Caco-2 (cell line): ENCODE measurements at regions of chr5 and their contacts with region 1.

Region 1: GRCh38 chr5:157598350-157598936 is 22.9 kb upstream of the ADAM19 start:
- DNase-seq: no peak
- H3K4me3 ChIP-seq: no peak overlapping the region
- H3K4me3 Mint-ChIP-seq: no peak overlapping the region
- H3K27ac Mint-ChIP-seq: no peak overlapping the region
- H3K4me1 ChIP-seq: peaks cover 22% of the 10 kb centered on the region
- H3K4me1 Mint-ChIP-seq: peaks cover 10% of the 10 kb centered on the region
- H3K27me3 ChIP-seq: no peaks in the 10 kb centered on the region
- H3K27me3 Mint-ChIP-seq: no peaks in the 10 kb centered on the region
- CTCF ChIP-seq: no peak

Region 2: DNA sequence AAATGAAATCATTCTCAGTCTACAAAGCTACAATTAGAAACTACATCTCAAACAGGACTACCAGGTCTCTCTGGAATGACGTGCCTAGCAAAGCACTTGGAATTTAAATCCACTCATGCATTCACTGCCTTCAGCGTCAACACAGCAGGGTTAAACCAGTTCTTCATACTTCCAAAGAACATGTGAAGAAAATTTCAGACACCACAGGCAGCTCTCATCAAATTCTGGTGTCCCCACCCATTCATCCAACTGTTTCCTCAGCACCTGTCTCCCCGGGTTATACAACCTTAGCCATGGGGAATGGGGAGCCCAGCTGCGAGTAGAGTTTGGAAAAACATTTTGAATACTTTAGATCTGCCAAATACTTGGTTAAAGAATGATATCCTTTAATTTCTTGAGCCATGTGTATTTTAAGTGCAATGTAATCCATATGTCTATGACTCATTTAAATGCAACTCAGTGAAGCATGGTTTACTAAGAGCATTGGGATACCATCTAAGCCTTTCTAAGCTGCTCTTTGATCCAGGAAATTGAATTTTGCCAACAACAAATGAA is 40.3 kb before region 1 on chr5:
- CTCF ChIA-PET with region 1: interaction called, 3 read pairs
- POLR2A ChIA-PET with region 1: no interaction called
- intact Hi-C with region 1: loop called (anchors 1 kb)
- DNase-seq: peak in 1 of 2 experiments; percentile 41
- H3K4me3 ChIP-seq: no peak overlapping the region
- H3K4me3 Mint-ChIP-seq: no peak overlapping the region
- H3K27ac Mint-ChIP-seq: no peak overlapping the region
- H3K4me1 ChIP-seq: peaks cover 37% of the 10 kb centered on the region
- H3K4me1 Mint-ChIP-seq: peaks cover 36% of the 10 kb centered on the region
- H3K27me3 ChIP-seq: no peaks in the 10 kb centered on the region
- H3K27me3 Mint-ChIP-seq: no peaks in the 10 kb centered on the region
- CTCF ChIP-seq: no peak